Heart left ventricle (tissue), 16 donors: ENCODE measurements at regions of chr4 and their contacts with region 1.

Region 1: GRCh38 chr4:56655209-56655626 is 25.9 kb downstream of the HOPX start:
- DNase-seq: peak in 4 of 5 donors; percentile 15 to 60 (median 42)
- ATAC-seq: peak; percentile 27 to 73 (median 65)
- H3K4me3 ChIP-seq: peak overlapping the region; percentile 35 to 69 (median 55)
- H3K27ac ChIP-seq: peak overlapping the region in 5 of 12 donors; percentile 34 to 85 (median 61)
- H3K4me1 ChIP-seq: peaks cover 0 to 35% (median 16%) of the 10 kb centered on the region in 12 donors
- H3K27me3 ChIP-seq: peaks cover 4 to 42% (median 19%) of the 10 kb centered on the region in 9 donors
- CTCF ChIP-seq: no peak
- POLR2A ChIP-seq: no peak

Region 2: DNA sequence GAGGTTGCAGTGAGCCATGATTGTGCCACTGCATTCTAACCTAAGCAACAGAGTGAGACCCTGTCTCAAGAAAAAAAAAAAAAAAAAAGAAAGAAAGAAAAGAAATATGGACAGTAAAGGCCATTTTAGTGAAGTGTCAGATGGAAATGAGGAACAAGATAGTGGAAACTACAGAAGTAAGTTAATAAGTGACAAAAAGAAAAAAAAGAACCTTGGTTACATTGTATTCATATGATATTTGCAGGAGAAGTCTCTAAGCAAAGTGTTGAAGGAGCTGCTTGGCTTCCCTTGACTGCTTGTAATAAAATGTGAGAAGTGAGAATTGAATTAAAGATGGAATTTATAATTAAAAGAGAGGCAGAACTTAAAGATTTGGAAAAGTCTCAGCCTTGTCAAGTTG is 47.3 kb before region 1 on chr4:
- intact Hi-C with region 1: no loop called
- DNase-seq: no peak
- ATAC-seq: no peak
- H3K4me3 ChIP-seq: no peak overlapping the region
- H3K27ac ChIP-seq: no peak overlapping the region
- H3K4me1 ChIP-seq: no peaks in the 10 kb centered on the region
- H3K27me3 ChIP-seq: peaks cover 0 to 12% (median 0%) of the 10 kb centered on the region in 9 donors
- CTCF ChIP-seq: no peak
- POLR2A ChIP-seq: no peak

Region 3: GRCh38 chr4:56786955-56787354 is 131.7 kb after region 1 on chr4:
- intact Hi-C with region 1: loop called in 1 of 10 experiments (anchors 5 kb)
- DNase-seq: peak; percentile 64 to 84 (median 79)
- ATAC-seq: peak; percentile 62 to 97 (median 88)
- H3K4me3 ChIP-seq: no peak overlapping the region
- H3K27ac ChIP-seq: peak overlapping the region in 10 of 12 donors; percentile 13 to 74 (median 53)
- H3K4me1 ChIP-seq: peaks cover 0 to 15% (median 0%) of the 10 kb centered on the region in 12 donors
- H3K27me3 ChIP-seq: no peaks in the 10 kb centered on the region
- CTCF ChIP-seq: no peak
- POLR2A ChIP-seq: no peak